GM12878 (cell line): ENCODE measurements at regions of chr22 and their contacts with region 1.

Region 1: GRCh38 chr22:44819971-44820631 is 67.7 kb downstream of the ARHGAP8 start:
- DNase-seq: no peak
- ATAC-seq: no peak
- H3K4me3 ChIP-seq: no peak overlapping the region
- H3K27ac ChIP-seq: no peak overlapping the region
- H3K4me1 ChIP-seq: no peaks in the 10 kb centered on the region
- H3K27me3 ChIP-seq: no peaks in the 10 kb centered on the region; a peak in 1 of 4 replicates
- CTCF ChIP-seq: no peak
- EP300 ChIP-seq: no peak
- POLR2A ChIP-seq: no peak
- RAD21 ChIP-seq: no peak

Region 2: DNA sequence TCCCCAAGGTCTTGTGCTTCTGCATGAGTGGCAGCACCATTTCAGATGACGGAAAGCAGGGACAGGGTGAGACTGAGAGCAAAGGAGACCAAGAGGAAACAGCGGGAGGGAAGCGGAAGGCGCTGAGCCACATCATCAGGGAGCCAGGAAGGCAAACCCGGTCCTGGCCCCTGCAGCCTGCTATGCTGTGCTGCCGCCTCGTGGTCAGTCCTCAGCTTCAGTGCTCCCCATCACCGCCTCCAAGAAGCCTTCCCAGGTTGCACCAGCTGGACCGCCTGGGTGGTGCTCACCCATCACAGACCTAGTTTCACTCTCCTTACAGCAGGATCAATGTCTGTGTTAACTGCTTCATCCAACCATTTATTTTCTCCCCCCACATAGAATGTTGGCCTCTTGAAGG is 262.7 kb after region 1 on chr22:
- CTCF ChIA-PET with region 1: no interaction called
- POLR2A ChIA-PET with region 1: no interaction called
- RAD21 ChIA-PET with region 1: no interaction called
- SMC1A ChIA-PET with region 1: no interaction called
- in situ Hi-C with region 1: no loop called
- intact Hi-C with region 1: loop called (anchors 5 kb)
- DNase-seq: no peak
- ATAC-seq: no peak
- H3K4me3 ChIP-seq: no peak overlapping the region
- H3K27ac ChIP-seq: no peak overlapping the region
- H3K4me1 ChIP-seq: no peaks in the 10 kb centered on the region
- H3K27me3 ChIP-seq: peaks cover 0 to under 1% of the 10 kb centered on the region in 2 experiments; a peak in 2 of 4 replicates
- CTCF ChIP-seq: peak in 2 of 3 experiments; percentile 24 to 38; a peak in 3 of 6 replicates
- EP300 ChIP-seq: no peak
- POLR2A ChIP-seq: no peak
- RAD21 ChIP-seq: no peak

Region 3: DNA sequence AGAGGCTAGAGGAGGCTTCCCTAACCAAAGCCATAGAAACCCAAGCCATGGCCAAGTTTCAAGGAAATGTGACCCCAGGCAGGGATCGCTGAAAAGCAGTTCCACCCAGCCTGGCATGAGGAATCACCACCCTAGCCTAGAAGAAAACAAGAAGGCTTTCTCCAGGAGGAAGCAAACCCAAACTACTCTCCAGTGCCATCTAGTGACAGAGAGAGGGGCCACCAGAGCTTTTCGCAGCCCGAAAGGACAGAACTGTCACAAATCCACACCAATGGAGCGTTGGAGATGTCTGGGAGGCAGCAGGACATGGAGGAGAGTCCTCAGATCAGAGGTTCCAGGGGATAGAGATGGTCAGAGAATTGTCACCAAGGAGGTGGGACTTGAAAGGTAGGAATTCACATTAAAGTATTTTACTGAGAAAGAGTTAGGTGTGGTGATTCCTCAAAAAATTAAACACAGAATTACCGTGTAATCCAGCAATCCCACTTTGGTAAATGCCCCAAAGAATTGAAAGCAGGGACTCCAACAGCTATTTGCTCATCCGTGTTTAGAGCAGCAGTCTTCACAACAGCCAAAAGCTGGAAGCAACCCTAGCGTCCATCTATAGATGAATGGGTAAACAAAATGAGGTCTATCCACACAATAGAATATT is 276.3 kb after region 1 on chr22:
- CTCF ChIA-PET with region 1: interaction called, 15 read pairs
- POLR2A ChIA-PET with region 1: no interaction called
- RAD21 ChIA-PET with region 1: interaction called, 14 read pairs
- SMC1A ChIA-PET with region 1: interaction called, 4 read pairs
- in situ Hi-C with region 1: loop called (anchors 5 kb)
- intact Hi-C with region 1: loop called (anchors 1 kb)
- DNase-seq: no peak
- ATAC-seq: peak; percentile 82
- H3K4me3 ChIP-seq: no peak overlapping the region
- H3K27ac ChIP-seq: no peak overlapping the region
- H3K4me1 ChIP-seq: no peaks in the 10 kb centered on the region
- H3K27me3 ChIP-seq: no peaks in the 10 kb centered on the region; a peak in 2 of 4 replicates
- CTCF ChIP-seq: peak; percentile 84 to 94 (median 93)
- EP300 ChIP-seq: no peak
- POLR2A ChIP-seq: no peak
- RAD21 ChIP-seq: peak; percentile 78